SK-N-SH (cell line): ENCODE measurements at regions of chr10 and their contacts with region 1.

Region 1: GRCh38 chr10:117167789-117168674 is 29.3 kb upstream of the KCNK18 start:
- DNase-seq: peak; percentile 96
- H3K4me3 ChIP-seq: peak overlapping the region; percentile 28 to 37
- H3K27ac ChIP-seq: no peak overlapping the region
- H3K4me1 ChIP-seq: peaks cover 0 to 9% of the 10 kb centered on the region in 2 experiments; a peak in 1 of 4 replicates
- H3K27me3 ChIP-seq: peaks cover 85% of the 10 kb centered on the region
- CTCF ChIP-seq: peak; percentile 82
- EP300 ChIP-seq: no peak
- RAD21 ChIP-seq: peak; percentile 57

Region 2: GRCh38 chr10:116796910-116797513 is 371.0 kb before region 1 on chr10:
- CTCF ChIA-PET with region 1: interaction called, 265 read pairs
- POLR2A ChIA-PET with region 1: interaction called, 4 read pairs
- DNase-seq: peak; percentile 87
- H3K4me3 ChIP-seq: no peak overlapping the region
- H3K27ac ChIP-seq: no peak overlapping the region
- H3K4me1 ChIP-seq: no peaks in the 10 kb centered on the region
- H3K27me3 ChIP-seq: no peaks in the 10 kb centered on the region
- CTCF ChIP-seq: peak; percentile 97
- EP300 ChIP-seq: no peak
- RAD21 ChIP-seq: peak; percentile 97

Region 3: DNA sequence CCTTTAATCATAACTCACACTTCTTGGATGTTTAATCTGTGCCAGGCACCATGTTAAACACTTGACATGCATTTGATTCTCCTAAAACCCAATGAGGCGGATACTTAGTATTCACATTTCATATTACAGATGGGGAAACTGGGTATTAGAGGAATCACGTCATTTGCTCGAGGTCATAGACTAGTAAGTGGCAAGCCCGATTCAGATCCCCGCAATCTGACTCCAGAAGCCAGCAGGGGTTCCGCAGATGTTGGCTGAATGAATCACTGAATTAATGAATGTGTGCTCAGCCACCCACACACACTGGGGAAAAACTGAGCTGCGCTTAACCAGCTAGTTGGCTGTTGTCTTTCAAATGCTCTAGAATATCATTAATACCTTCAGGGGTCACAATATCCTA is 341.2 kb before region 1 on chr10:
- CTCF ChIA-PET with region 1: interaction called, 19 read pairs
- POLR2A ChIA-PET with region 1: no interaction called
- DNase-seq: no peak
- H3K4me3 ChIP-seq: no peak overlapping the region
- H3K27ac ChIP-seq: no peak overlapping the region
- H3K4me1 ChIP-seq: peaks cover 0 to 6% of the 10 kb centered on the region in 2 experiments; a peak in 1 of 4 replicates
- H3K27me3 ChIP-seq: no peaks in the 10 kb centered on the region; the same call in 1 of the 2 replicates
- CTCF ChIP-seq: no peak
- EP300 ChIP-seq: no peak
- RAD21 ChIP-seq: no peak

Region 4: DNA sequence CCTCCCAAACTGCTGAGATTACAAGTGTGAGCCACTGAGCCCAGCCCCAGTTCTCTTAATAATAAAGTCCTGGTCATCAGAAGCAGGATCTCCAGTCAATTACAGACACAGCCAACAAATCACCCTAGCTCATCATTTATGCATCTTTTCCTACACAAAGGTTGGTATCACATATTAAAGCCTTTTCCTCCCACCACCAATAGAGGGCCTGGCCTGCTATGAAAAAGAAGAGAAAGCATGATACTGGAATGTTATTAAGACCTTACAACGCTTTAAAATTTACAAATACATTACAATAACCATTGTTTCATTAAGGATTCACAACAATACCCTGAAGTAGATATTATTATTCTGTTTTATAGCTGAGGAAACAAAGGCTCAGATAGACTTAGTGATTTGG is 55.8 kb before region 1 on chr10:
- CTCF ChIA-PET with region 1: interaction called, 21 read pairs
- POLR2A ChIA-PET with region 1: no interaction called
- DNase-seq: no peak
- H3K4me3 ChIP-seq: no peak overlapping the region
- H3K27ac ChIP-seq: no peak overlapping the region
- H3K4me1 ChIP-seq: 0 out of 4 replicates have a peak, but pooled peaks cover 0 to 4% of the 10 kb centered on the region in 2 experiments
- H3K27me3 ChIP-seq: no peaks in the 10 kb centered on the region
- CTCF ChIP-seq: peak; percentile 50
- EP300 ChIP-seq: no peak
- RAD21 ChIP-seq: peak; percentile 40

Region 5: GRCh38 chr10:117137031-117137910 is 30.8 kb before region 1 on chr10:
- CTCF ChIA-PET with region 1: interaction called, 37 read pairs
- POLR2A ChIA-PET with region 1: no interaction called
- DNase-seq: peak; percentile 74
- H3K4me3 ChIP-seq: peak overlapping the region; percentile 14 to 39; a peak in 3 of 4 replicates
- H3K27ac ChIP-seq: no peak overlapping the region
- H3K4me1 ChIP-seq: peaks cover 0 to 2% of the 10 kb centered on the region in 2 experiments; a peak in 2 of 4 replicates
- H3K27me3 ChIP-seq: peaks cover 94% of the 10 kb centered on the region
- CTCF ChIP-seq: no peak
- EP300 ChIP-seq: no peak
- RAD21 ChIP-seq: no peak

Region 6: GRCh38 chr10:117186832-117187615 is 19.0 kb after region 1 on chr10:
- CTCF ChIA-PET with region 1: interaction called, 11 read pairs
- POLR2A ChIA-PET with region 1: no interaction called
- DNase-seq: no peak
- H3K4me3 ChIP-seq: no peak overlapping the region
- H3K27ac ChIP-seq: no peak overlapping the region
- H3K4me1 ChIP-seq: no peaks in the 10 kb centered on the region
- H3K27me3 ChIP-seq: no peaks in the 10 kb centered on the region
- CTCF ChIP-seq: no peak
- EP300 ChIP-seq: no peak
- RAD21 ChIP-seq: no peak